Heart right ventricle (tissue), 16 donors: ENCODE measurements at regions of chr2 and their contacts with region 1.

Region 1: GRCh38 chr2:66574701-66575624 is 140.0 kb downstream of the MEIS1 start:
- DNase-seq: peak; percentile 27 to 77
- ATAC-seq: peak; percentile 68 to 83 (median 76)
- H3K4me3 ChIP-seq: peak overlapping the region in 9 of 10 donors; percentile 30 to 63 (median 50)
- H3K27ac ChIP-seq: peak overlapping the region in 5 of 10 donors; percentile 9 to 64 (median 56)
- H3K4me1 ChIP-seq: peaks cover 16 to 46% (median 23%) of the 10 kb centered on the region in 9 donors
- H3K27me3 ChIP-seq: peaks cover 13 to 73% (median 46%) of the 10 kb centered on the region in 7 donors
- CTCF ChIP-seq: peak in 8 of 9 donors; percentile 21 to 70 (median 50)

Region 2: DNA sequence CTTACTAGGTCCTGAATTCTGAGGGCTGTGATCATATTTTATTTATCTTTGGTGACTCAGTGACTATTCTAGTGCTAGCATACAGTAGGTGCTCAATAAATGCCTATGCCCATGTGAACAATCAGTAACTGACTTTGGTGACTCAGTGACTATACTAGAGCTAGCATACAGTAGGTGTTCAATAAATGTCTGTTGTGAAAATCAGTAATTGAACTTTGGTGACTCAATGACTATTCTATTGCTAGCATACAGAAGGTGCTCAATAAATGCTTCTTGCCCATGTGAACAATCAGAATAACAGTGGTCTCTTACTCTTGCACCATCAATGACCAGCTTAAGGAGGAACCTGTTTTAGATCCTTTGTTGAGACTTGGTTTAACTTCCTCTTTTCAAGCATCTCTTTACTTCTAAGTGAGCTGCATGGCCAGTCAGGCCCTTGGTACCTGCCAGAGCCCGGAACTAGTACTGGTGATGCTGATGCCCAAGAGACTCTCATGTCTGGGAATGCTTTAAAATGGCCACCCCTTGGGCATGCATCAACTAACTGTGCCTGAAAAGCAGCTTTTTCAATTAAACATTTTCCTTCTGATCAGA is 927.6 kb before region 1 on chr2:
- intact Hi-C with region 1: loop called in 1 of 10 experiments (anchors 10 kb)
- DNase-seq: no peak
- ATAC-seq: no peak
- H3K4me3 ChIP-seq: no peak overlapping the region
- H3K27ac ChIP-seq: no peak overlapping the region
- H3K4me1 ChIP-seq: no peaks in the 10 kb centered on the region
- H3K27me3 ChIP-seq: no peaks in the 10 kb centered on the region
- CTCF ChIP-seq: no peak

Region 3: DNA sequence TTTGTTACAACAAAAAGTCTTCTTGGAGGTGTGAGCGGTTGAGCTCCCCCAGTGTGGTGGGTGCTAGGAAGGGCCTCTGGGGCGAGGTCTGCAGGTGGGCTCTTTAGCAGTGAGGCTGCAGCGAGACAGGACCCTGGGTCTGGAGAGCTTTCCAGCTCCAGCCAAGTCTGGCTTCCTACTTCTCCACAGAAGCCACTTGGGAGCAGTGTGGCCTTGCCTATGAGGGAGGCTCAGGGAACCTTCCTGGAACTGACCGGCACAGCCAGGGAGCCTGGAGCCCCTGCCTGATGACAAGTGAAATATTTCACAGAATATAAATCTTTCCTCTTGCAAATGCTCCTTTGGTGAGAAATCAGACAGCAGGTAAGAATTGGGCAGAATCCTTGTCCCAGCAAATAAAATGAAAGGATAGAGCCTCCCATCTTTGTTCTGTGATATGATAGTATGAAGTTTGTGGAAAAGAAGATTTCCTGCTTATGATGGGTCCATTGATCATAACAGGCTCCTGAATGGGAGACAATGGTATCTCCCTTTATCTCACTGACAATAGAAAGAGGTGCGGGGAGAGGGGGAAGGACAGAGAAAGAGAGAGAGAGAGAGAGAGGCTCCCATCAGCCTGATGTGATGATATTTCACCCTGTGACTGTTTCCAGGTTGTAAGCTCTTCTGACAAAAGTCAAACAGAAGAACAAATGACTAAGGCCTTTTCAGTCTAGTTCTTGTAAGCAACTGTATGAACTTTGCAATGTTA is 852.8 kb before region 1 on chr2:
- intact Hi-C with region 1: loop called in 3 of 10 experiments (anchors 10 kb)
- DNase-seq: peak; percentile 20 to 32
- ATAC-seq: peak; percentile 79 to 93 (median 86)
- H3K4me3 ChIP-seq: no peak overlapping the region
- H3K27ac ChIP-seq: no peak overlapping the region
- H3K4me1 ChIP-seq: no peaks in the 10 kb centered on the region
- H3K27me3 ChIP-seq: peaks cover 0 to 10% (median 0%) of the 10 kb centered on the region in 7 donors
- CTCF ChIP-seq: peak in 8 of 9 donors; percentile 17 to 63 (median 46)

Region 4: DNA sequence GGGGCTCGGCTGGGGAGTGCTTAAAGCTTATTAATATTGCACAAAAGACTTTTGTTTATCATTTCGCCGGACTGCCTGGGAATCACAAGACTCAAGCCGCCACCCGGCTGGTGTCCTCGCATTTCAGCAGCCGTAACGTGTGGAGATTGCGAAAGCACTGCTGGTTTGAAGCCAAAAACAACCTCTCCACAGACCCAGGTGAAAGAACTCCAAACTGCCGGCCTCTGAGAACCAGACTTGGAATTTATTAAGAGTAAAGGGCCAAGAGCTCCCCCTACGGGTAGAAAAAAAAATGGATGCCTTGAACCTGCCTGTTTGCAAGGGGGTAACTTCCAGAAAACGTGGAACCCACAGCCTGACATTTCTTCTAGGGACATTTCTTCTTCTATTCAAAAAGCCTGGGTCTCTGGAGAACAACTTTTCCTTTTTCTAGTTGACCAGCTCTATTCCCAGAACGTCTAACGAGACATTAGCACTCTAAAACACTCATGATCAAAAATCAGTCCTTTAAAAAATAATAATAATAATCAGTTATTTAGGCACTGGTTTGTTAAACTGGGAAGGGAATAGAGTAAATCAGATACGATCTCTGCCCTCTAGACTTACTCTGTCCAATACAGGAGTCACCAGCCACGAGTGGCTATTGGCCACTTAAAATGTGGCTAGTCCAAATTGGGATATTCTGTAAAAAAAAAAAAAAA is 1271.6 kb after region 1 on chr2:
- intact Hi-C with region 1: loop called in 8 of 10 experiments (anchors 5 to 10 kb)
- DNase-seq: peak; percentile 41 to 81
- ATAC-seq: peak; percentile 71 to 91 (median 78)
- H3K4me3 ChIP-seq: peak overlapping the region in 5 of 10 donors; percentile 14 to 31 (median 27)
- H3K27ac ChIP-seq: no peak overlapping the region
- H3K4me1 ChIP-seq: peaks cover 0 to 19% (median 0%) of the 10 kb centered on the region in 9 donors
- H3K27me3 ChIP-seq: peaks cover 0 to 3% (median 0%) of the 10 kb centered on the region in 7 donors
- CTCF ChIP-seq: peak; percentile 45 to 81 (median 75)